RWPE1 (cell line): ENCODE measurements at regions of chr1 and their contacts with region 1.

Region 1: GRCh38 chr1:164786980-164787833 is 228.2 kb downstream of the PBX1 start:
- DNase-seq: peak; percentile 81
- H3K27ac ChIP-seq: peak overlapping the region; percentile 79
- CTCF ChIP-seq: peak; percentile 89

Region 2: DNA sequence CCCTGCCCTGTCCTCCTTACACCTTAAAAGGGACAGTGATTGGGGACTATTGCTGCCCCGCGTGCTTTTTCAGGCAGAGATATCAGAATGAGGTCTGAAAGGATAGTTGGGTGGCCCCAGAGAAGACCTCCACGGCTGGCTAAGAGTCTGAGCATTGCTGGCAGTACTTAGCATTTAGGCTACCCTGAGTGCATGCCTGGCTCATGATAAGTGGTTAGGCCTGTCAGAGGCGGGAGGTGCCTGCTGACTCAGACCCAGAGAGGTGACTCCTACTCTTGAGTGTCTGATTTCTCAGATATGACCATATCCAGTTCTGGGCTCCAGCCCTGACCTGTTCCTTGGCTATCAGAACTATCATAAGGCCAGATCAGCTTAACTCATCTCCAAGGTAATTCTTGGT is 14.6 kb before region 1 on chr1:
- CTCF ChIA-PET with region 1: interaction called, 12 read pairs
- POLR2A ChIA-PET with region 1: no interaction called
- DNase-seq: peak; percentile 87
- H3K27ac ChIP-seq: peak overlapping the region; percentile 83
- CTCF ChIP-seq: no peak

Region 3: DNA sequence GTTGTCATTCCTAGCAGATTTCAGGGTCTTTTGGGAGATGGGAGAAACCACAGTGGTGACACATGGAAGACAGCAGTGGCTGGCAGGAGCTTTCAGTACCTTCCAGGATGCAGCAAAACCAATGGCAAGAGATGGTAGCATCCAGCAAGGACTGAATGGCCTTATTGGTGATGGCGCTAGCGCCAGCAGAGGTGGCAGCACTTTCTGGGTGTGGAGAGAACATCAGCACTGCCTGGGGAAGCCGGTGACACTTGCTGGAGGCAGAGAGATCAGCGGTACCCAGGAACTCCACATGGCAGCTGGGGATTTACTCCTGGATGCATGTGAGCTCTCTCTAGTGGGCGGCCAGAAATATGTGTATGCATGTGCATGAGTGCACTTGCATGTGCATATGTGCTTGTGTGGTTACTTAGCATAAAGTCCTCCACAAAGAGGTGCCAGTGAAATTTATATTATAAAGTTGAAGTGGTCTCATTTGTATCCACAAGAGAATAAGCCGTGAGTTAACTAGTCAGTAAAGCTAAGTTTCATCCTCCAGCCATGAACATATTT is 204.6 kb after region 1 on chr1:
- CTCF ChIA-PET with region 1: no interaction called
- POLR2A ChIA-PET with region 1: no interaction called
- DNase-seq: no peak
- H3K27ac ChIP-seq: no peak overlapping the region
- CTCF ChIP-seq: no peak